Breast epithelium (tissue), 4 donors: ENCODE measurements at regions of chr12 and their contacts with region 1.

Region 1: DNA sequence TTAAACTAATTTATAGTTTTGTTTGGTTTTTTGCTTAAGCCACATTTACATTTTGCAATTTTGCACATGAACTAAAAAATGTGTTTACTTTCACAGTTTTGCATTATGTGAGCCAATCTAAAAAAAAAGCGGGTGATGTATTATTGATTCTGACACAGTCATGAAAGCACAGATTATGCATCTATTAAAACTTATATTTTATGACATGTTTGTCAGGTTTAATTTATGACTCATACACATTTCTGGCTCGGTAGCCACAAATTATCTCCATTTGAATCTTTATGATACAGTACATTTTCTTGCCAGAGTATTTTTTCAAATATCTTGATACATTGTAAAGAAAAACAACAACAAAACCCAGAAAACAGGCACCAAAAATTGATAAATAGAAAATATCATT is 280.4 kb upstream of the GRIP1 start:
- DNase-seq: no peak
- H3K4me3 ChIP-seq: no peak overlapping the region
- H3K27ac ChIP-seq: no peak overlapping the region
- H3K4me1 ChIP-seq: peaks cover 0 to 7% of the 10 kb centered on the region in 2 donors
- H3K27me3 ChIP-seq: no peaks in the 10 kb centered on the region
- CTCF ChIP-seq: no peak
- POLR2A ChIP-seq: no peak

Region 2: DNA sequence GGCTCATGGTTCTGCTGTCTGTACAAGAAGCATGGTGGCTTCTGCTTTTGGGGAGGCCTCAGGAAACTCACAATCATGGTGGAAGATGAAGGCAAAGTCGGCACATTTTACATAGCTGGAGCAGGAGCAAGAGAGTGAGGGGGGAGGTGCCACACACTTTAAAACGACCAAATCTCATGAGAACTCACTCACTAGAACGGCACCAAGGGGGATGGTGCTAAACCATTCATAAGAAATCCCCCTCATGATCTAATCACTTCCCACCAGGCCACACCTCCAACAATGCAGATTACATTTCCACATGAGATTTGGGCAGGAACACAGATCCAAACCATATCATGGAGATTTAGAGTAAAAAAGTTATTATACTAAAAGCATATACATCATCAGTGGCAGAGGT is 1803.5 kb before region 1 on chr12:
- intact Hi-C with region 1: no loop called
- DNase-seq: no peak
- H3K4me3 ChIP-seq: no peak overlapping the region
- H3K27ac ChIP-seq: no peak overlapping the region
- H3K4me1 ChIP-seq: no peaks in the 10 kb centered on the region
- H3K27me3 ChIP-seq: no peaks in the 10 kb centered on the region
- CTCF ChIP-seq: no peak
- POLR2A ChIP-seq: no peak

Region 3: GRCh38 chr12:66555113-66555746 is 404.0 kb before region 1 on chr12:
- intact Hi-C with region 1: no loop called
- DNase-seq: no peak
- H3K4me3 ChIP-seq: no peak overlapping the region
- H3K27ac ChIP-seq: no peak overlapping the region
- H3K4me1 ChIP-seq: no peaks in the 10 kb centered on the region
- H3K27me3 ChIP-seq: no peaks in the 10 kb centered on the region
- CTCF ChIP-seq: no peak
- POLR2A ChIP-seq: no peak

Region 4: GRCh38 chr12:67315661-67316060 is 356.4 kb after region 1 on chr12:
- intact Hi-C with region 1: loop called (anchors 10 kb)
- DNase-seq: no peak
- H3K4me3 ChIP-seq: no peak overlapping the region
- H3K27ac ChIP-seq: no peak overlapping the region
- H3K4me1 ChIP-seq: no peaks in the 10 kb centered on the region
- H3K27me3 ChIP-seq: no peaks in the 10 kb centered on the region
- CTCF ChIP-seq: no peak
- POLR2A ChIP-seq: no peak